Mammary epithelial cell (primary cell): ENCODE measurements at regions of chrX and their contacts with region 1.

Region 1: DNA sequence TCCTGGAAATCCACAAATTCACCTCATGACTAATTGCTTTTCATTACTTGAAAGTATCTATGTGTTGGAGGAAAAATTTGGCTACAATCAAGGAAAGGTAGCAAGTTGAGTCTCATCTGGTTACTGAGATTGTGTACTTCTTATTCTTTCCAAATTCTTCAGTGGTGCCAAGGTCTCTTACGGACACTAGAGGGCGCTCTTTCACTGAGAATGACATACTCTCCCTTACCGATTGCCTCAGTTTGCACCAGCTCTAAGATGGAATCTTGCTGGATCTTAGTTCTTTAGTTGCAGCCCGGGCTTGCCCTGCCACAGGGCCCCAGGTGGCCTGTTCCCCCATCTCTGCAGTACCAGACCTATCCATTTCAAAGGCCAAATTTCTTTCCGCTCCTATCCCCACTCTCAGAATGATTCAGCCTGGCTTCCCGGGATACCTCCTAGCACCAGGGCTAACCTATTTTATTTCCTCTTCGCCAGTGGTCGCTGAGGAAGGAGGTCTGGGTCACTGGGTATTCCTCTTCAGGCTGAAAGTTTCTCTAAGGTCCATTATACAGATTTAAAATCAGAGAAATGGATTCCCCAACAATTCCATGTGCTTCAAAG is 24.6 kb upstream of the GPR50 start:
- DNase-seq: peak; percentile 31
- H3K4me3 ChIP-seq: no peak overlapping the region
- H3K27ac ChIP-seq: no peak overlapping the region
- H3K4me1 ChIP-seq: no peaks in the 10 kb centered on the region
- H3K27me3 ChIP-seq: peaks cover 3% of the 10 kb centered on the region
- CTCF ChIP-seq: peak; percentile 52 to 69

Region 2: DNA sequence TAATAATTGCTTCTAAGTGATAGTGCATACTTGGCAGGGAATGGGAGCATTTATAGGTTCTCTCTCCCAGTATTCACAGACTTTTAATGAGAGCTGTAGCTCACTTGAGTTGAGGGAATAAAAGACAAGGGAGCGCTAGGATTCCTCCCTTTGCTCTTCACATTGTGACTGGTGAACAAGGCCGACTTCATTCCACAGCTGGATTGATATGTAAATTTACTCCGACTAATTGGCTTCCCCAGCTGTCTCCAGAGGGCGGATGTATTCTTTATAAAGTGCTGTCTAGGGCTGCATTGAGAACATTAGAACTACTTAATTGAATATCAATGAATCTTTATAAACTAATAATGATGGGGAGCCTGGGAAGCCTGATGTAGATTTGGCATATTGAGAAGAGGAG is 88.0 kb after region 1 on chrX:
- CTCF ChIA-PET with region 1: no interaction called
- dilution Hi-C with region 1: no loop called
- in situ Hi-C with region 1: no loop called
- intact Hi-C with region 1: no loop called
- DNase-seq: no peak
- H3K4me3 ChIP-seq: no peak overlapping the region
- H3K27ac ChIP-seq: no peak overlapping the region
- H3K4me1 ChIP-seq: no peaks in the 10 kb centered on the region
- H3K27me3 ChIP-seq: no peaks in the 10 kb centered on the region
- CTCF ChIP-seq: no peak

Region 3: GRCh38 chrX:151359931-151360871 is 208.4 kb after region 1 on chrX:
- CTCF ChIA-PET with region 1: interaction called, 3 read pairs
- dilution Hi-C with region 1: no loop called
- in situ Hi-C with region 1: loop called in 1 of 2 experiments (anchors 25 kb)
- intact Hi-C with region 1: loop called (anchors 1 kb)
- DNase-seq: peak; percentile 2
- H3K4me3 ChIP-seq: no peak overlapping the region
- H3K27ac ChIP-seq: no peak overlapping the region
- H3K4me1 ChIP-seq: no peaks in the 10 kb centered on the region
- H3K27me3 ChIP-seq: no peaks in the 10 kb centered on the region
- CTCF ChIP-seq: peak; percentile 46 to 73

Region 4: DNA sequence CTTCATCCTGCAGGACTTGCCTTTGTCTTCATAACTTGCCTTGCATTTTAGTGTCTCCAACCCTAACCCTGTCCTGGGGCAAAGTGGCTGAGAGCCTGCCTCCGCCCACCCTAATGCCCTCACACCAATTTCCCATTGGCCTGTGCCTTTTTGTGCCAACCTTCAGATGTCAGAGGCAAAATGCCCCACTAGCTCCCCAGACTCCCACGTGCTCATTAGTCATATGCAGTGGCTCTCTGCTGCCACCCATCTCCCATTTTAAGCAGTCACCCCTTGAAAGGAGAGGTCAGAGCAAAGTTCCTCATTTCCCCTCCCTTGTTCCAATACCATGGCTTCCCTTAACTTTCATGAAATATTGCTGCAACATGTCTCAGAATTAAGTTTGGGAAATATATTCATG is 336.9 kb after region 1 on chrX:
- CTCF ChIA-PET with region 1: no interaction called
- dilution Hi-C with region 1: no loop called
- in situ Hi-C with region 1: no loop called
- intact Hi-C with region 1: loop called (anchors 1 kb)
- DNase-seq: peak; percentile 5
- H3K4me3 ChIP-seq: no peak overlapping the region
- H3K27ac ChIP-seq: no peak overlapping the region
- H3K4me1 ChIP-seq: no peaks in the 10 kb centered on the region
- H3K27me3 ChIP-seq: no peaks in the 10 kb centered on the region
- CTCF ChIP-seq: peak; percentile 25 to 56

Region 5: DNA sequence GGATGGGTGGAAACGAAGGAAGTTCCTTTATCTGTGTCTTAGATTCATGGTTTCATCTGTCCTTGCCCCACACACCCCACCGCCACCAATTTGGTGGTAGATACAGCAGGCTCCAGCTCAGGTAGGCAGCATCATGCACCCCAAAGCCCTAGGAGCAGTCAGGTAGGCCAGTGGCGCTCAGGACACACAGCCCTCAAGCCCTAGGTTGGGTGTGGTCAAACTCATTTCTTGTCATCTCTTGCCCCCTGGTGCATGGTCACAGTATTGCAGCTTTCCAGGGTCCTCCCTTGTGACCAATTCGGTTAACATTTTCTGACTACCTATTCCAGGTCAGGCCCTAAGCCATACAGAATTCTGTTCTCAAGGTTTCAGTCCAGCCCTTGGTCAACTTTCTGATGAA is 529.0 kb after region 1 on chrX:
- CTCF ChIA-PET with region 1: no interaction called
- dilution Hi-C with region 1: no loop called
- in situ Hi-C with region 1: loop called (anchors 25 kb)
- intact Hi-C with region 1: loop called (anchors 1 kb)
- DNase-seq: peak; percentile 8
- H3K4me3 ChIP-seq: no peak overlapping the region
- H3K27ac ChIP-seq: no peak overlapping the region
- H3K4me1 ChIP-seq: no peaks in the 10 kb centered on the region
- H3K27me3 ChIP-seq: no peaks in the 10 kb centered on the region
- CTCF ChIP-seq: peak; percentile 55 to 68

Region 6: DNA sequence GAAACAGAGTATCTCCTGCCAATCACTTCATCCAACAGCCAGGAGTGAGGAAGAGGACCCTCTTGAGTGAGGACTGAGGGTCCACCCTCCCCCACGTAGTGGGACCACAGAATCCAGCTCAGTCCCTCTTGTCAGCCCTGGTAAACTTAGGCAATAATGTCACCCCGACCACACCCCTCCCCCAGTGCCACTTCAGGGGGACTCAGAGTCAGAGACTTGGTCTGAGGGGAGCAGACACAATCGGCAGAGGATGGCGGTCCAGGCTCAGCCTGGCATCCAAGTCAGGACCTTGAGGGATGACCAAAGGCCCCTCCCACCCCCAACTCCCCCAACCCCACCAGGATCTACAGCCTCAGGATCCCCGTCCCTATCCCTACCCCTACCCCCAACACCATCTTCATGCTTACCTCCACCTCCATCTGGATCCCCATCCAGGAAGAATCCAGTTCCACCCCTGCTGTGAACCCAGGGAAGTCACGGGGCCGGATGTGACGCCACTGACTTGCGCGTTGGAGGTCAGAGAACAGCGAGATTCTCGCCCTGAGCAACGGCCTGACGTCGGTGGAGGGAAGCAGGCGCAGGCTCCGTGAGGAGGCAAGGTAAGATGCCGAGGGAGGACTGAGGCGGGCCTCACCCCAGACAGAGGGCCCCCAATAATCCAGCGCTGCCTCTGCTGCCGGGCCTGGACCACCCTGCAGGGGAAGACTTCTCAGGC is 1581.7 kb after region 1 on chrX and contains the starts of genes CSAG1 and MAGEA12:
- CTCF ChIA-PET with region 1: no interaction called
- dilution Hi-C with region 1: no loop called
- in situ Hi-C with region 1: no loop called
- intact Hi-C with region 1: no loop called
- DNase-seq: no peak
- H3K4me3 ChIP-seq: no peak within 1 kb of the TSS
- H3K27ac ChIP-seq: no peak within 1 kb of the TSS
- H3K4me1 ChIP-seq: no peaks in the 10 kb centered on the region
- H3K27me3 ChIP-seq: no peaks in the 10 kb centered on the region
- CTCF ChIP-seq: no peak
- total RNA-seq, gene CSAG1: not detected
- total RNA-seq, gene MAGEA12: not detected

Region 7: GRCh38 chrX:152821145-152821765 is 1669.5 kb after region 1 on chrX:
- CTCF ChIA-PET with region 1: no interaction called
- dilution Hi-C with region 1: no loop called
- in situ Hi-C with region 1: no loop called
- intact Hi-C with region 1: loop called (anchors 5 kb)
- DNase-seq: peak; percentile 13
- H3K4me3 ChIP-seq: no peak overlapping the region
- H3K27ac ChIP-seq: no peak overlapping the region
- H3K4me1 ChIP-seq: peaks cover 5% of the 10 kb centered on the region
- H3K27me3 ChIP-seq: no peaks in the 10 kb centered on the region
- CTCF ChIP-seq: peak; percentile 56 to 71